SK-N-SH (cell line): ENCODE measurements at regions of chr2 and their contacts with region 1.

Region 1: DNA sequence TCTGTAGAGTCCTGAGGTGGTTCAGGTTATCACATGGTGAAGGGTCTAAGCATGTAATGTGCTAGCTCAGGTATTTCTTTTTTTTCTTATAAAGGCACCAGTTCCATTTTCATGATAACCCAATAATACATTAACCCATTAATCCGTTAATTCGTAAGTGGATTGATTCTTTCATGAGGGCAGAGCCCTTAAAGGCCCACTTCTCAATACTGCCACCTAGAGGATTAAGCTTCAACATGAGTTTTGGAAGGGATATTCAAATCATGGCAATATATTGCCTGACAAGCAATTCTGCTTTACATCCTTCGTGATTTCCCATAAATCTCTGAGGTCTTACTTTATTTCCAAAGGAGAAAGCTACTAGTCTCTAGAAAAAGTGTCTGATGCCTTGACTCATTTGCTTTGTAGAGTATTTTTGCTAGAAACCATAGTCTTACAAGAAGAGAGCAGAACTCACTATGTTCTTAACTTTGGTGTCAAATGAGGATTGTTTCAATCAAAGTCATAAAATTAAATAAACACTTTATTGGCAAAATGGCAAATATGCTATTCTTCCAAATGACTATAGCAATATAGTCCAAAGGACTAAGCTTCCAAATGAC is 271.3 kb downstream of the KCNS3 start:
- DNase-seq: peak; percentile 57
- H3K4me3 ChIP-seq: no peak overlapping the region
- H3K27ac ChIP-seq: no peak overlapping the region
- H3K4me1 ChIP-seq: no peaks in the 10 kb centered on the region
- H3K27me3 ChIP-seq: no peaks in the 10 kb centered on the region
- CTCF ChIP-seq: peak; percentile 80
- EP300 ChIP-seq: no peak
- RAD21 ChIP-seq: peak; percentile 85

Region 2: GRCh38 chr2:17830053-17831034 is 319.4 kb before region 1 on chr2:
- CTCF ChIA-PET with region 1: interaction called, 19 read pairs
- POLR2A ChIA-PET with region 1: no interaction called
- DNase-seq: peak; percentile 92
- H3K4me3 ChIP-seq: peak overlapping the region; percentile 43 to 59
- H3K27ac ChIP-seq: no peak overlapping the region
- H3K4me1 ChIP-seq: peaks cover 0 to 10% of the 10 kb centered on the region in 2 experiments; a peak in 1 of 4 replicates
- H3K27me3 ChIP-seq: peaks cover 11% of the 10 kb centered on the region; the same call in 1 of the 2 replicates
- CTCF ChIP-seq: peak; percentile 94
- EP300 ChIP-seq: no peak
- RAD21 ChIP-seq: peak; percentile 79

Region 3: DNA sequence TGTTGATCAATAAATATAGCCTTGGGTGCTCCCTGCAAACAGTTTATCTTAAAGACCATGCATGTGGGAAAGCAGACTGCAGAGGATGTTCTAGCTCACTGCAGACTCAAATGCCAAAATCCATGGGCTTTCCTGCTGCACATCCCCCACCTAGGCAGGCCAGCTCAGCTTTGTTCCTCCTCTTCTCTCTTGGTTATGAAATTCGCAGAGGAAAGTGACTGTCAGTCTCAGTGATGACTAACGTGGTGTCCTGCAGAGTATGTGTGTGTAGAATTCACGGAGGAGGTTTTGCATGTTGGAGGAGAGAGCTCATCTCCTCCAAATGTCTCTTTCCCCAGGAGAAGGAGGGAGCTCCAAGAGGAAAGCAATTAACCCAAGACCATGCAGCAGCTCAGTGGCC is 292.7 kb before region 1 on chr2:
- CTCF ChIA-PET with region 1: interaction called, 90 read pairs
- POLR2A ChIA-PET with region 1: no interaction called
- DNase-seq: no peak
- H3K4me3 ChIP-seq: no peak overlapping the region
- H3K27ac ChIP-seq: no peak overlapping the region
- H3K4me1 ChIP-seq: no peaks in the 10 kb centered on the region
- H3K27me3 ChIP-seq: no peaks in the 10 kb centered on the region
- CTCF ChIP-seq: no peak
- EP300 ChIP-seq: no peak
- RAD21 ChIP-seq: no peak

Region 4: DNA sequence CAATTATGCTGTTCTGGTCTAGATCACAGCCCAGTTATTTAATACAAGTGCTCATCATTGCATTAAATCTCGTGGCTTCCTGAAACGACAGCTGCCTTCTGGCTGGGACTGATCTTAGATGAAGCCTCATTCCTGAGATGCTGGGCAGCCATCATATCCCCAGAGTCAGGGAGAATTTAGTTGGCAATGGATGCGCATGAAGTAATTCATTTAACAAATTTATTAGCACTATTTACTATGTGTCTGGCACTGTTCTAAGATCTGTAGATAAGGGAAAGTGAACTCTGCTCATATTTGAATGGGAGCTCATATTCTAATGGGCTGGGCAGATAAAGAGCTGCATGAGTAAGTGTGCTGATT is 26.6 kb before region 1 on chr2:
- CTCF ChIA-PET with region 1: interaction called, 23 read pairs
- POLR2A ChIA-PET with region 1: no interaction called
- DNase-seq: peak; percentile 47
- H3K4me3 ChIP-seq: no peak overlapping the region
- H3K27ac ChIP-seq: peak overlapping the region in 1 of 2 experiments; percentile 78; a peak in 1 of 4 replicates
- H3K4me1 ChIP-seq: peaks cover 0 to 34% of the 10 kb centered on the region in 2 experiments; a peak in 2 of 4 replicates
- H3K27me3 ChIP-seq: no peaks in the 10 kb centered on the region
- CTCF ChIP-seq: no peak
- EP300 ChIP-seq: peak in 1 of 2 experiments; percentile 94; a peak in 2 of 4 replicates
- RAD21 ChIP-seq: peak; percentile 16; the same call in 1 of the 2 replicates

Region 5: GRCh38 chr2:18171191-18172139 is 21.7 kb after region 1 on chr2:
- CTCF ChIA-PET with region 1: interaction called, 23 read pairs
- POLR2A ChIA-PET with region 1: no interaction called
- DNase-seq: no peak
- H3K4me3 ChIP-seq: no peak overlapping the region
- H3K27ac ChIP-seq: no peak overlapping the region
- H3K4me1 ChIP-seq: no peaks in the 10 kb centered on the region
- H3K27me3 ChIP-seq: no peaks in the 10 kb centered on the region
- CTCF ChIP-seq: no peak
- EP300 ChIP-seq: no peak
- RAD21 ChIP-seq: no peak